ENCODE measurements at regions of chr4 and their contacts with region 1.

Region 1: DNA sequence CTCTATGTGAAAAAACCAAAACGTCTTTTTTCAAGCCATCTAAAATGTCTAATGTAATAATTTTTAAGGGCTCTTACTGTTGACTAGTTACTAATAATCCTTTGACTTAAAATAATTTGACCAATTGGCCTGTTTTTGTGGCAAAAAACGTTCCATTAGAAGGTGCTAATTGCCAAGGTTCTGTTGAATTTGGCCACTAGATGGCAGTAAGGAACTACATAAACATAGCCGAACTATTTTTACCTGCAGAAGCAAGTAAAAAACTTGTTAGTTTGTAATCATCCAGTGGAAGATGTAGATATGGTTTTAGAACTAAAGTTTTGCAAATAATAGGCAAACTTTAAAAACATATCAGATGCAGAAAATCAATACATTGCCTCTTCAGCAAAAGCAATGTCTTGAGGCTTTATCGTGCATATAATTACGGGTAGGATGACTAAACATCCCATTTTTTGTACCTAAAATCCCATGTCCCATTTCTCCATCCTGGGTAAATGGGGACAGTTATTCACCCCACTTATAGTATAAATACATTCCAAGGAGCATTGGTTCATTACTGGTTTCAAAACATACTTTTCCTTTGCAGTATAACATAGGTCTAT is 57.6 kb downstream of the PROM1 start:
- DNase-seq: peak in 1 of 2 donors; percentile 33
- ATAC-seq: peak in 3 of 8 donors; percentile 29 to 51 (median 30)
- H3K4me3 ChIP-seq: no peak overlapping the region
- H3K27ac ChIP-seq: peak overlapping the region in 1 of 10 donors; percentile 76
- H3K4me1 ChIP-seq: peaks cover 0 to 55% (median 14%) of the 10 kb centered on the region in 9 donors
- H3K27me3 ChIP-seq: no peaks in the 10 kb centered on the region
- CTCF ChIP-seq: peak; percentile 77 to 94 (median 87)

Region 2: DNA sequence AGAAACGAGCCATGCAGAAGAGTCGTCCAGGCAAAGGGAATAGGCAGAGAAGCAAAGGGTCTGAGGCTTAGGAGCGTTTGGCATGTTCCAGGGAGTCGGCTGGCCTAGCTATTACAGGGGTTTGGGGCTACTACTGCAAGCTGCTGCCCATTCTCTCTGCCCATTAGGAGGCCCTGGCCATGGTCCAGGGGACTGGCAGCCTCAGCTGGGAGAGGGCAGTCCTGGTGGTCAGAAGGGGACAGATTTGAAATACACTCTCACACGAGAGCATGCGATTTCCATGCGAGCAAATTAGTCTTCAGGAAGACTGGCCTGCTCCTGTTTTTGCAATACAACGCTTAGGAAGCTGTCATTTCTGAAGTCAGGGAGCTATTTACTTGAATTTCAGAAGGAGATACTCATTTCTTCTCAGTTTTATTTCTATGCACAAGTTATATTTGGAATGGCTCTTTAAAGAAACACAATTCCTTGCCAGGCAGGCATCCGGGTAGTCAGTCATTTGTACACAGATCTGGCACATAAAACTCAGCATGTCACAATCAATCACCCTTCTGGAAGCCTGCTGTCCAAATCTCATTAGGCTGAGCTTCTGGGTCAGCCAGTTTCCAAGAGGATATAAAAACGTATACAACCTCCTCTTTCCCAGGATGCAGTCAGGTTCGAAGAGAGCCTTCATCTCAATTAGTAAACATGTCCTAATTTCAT is 30.6 kb after region 1 on chr4:
- intact Hi-C with region 1: loop called in 1 of 10 experiments (anchors 1 kb)
- DNase-seq: no peak
- ATAC-seq: peak in 6 of 8 donors; percentile 17 to 80 (median 56)
- H3K4me3 ChIP-seq: no peak overlapping the region
- H3K27ac ChIP-seq: peak overlapping the region in 4 of 10 donors; percentile 2 to 68 (median 38)
- H3K4me1 ChIP-seq: peaks cover 2 to 30% (median 20%) of the 10 kb centered on the region in 9 donors
- H3K27me3 ChIP-seq: no peaks in the 10 kb centered on the region
- CTCF ChIP-seq: no peak

Region 3: DNA sequence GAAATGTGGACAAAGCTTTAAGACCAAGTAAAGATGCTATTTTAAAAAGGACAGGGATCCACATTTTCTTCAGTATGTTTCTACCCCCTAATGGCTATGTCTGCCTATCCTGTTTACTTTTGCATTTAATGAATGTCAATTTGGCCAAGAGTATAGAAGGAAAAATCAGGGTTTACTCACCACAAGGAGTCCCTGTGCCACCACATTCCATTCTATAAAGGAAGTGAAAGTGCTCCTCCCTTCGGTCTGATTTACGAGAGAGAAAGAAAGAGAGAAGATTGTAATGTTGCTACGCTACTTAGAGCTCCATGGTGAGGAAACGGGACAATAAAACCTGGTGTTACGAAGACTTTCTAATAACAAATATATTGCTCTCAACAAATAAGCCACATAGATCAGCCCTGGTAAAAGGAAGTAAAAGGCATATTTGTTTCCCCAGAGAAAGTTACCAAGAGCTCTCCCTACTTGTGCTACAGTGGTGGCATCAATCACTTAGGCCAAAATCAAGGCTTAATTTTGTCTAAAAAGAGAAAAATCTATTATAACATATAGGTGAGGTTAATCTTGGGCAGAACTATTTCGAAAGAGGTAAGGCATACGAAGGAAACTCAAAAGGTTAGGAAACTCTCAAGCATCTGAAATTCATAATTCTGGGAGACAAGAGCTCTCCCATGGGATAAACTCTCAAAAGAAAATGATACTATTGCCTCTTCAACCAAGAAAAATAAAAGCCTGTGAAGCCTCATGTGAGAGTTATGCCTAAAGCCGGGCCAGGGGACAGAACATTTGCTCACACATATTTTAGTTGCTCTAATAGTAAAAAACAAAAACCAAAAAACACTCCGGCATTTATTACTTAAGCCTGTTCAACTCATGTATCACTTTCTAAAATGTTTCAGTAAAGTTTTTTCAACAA is 170.5 kb after region 1 on chr4:
- intact Hi-C with region 1: loop called in 9 of 10 experiments (anchors 2 to 10 kb)
- DNase-seq: peak in 1 of 2 donors; percentile 31
- ATAC-seq: peak; percentile 73 to 93 (median 84)
- H3K4me3 ChIP-seq: peak overlapping the region in 7 of 10 donors; percentile 4 to 34 (median 26)
- H3K27ac ChIP-seq: peak overlapping the region in 9 of 10 donors; percentile 19 to 73 (median 41)
- H3K4me1 ChIP-seq: peaks cover 0 to 65% (median 55%) of the 10 kb centered on the region in 9 donors
- H3K27me3 ChIP-seq: no peaks in the 10 kb centered on the region
- CTCF ChIP-seq: peak in 7 of 9 donors; percentile 39 to 67 (median 51)

Region 4: DNA sequence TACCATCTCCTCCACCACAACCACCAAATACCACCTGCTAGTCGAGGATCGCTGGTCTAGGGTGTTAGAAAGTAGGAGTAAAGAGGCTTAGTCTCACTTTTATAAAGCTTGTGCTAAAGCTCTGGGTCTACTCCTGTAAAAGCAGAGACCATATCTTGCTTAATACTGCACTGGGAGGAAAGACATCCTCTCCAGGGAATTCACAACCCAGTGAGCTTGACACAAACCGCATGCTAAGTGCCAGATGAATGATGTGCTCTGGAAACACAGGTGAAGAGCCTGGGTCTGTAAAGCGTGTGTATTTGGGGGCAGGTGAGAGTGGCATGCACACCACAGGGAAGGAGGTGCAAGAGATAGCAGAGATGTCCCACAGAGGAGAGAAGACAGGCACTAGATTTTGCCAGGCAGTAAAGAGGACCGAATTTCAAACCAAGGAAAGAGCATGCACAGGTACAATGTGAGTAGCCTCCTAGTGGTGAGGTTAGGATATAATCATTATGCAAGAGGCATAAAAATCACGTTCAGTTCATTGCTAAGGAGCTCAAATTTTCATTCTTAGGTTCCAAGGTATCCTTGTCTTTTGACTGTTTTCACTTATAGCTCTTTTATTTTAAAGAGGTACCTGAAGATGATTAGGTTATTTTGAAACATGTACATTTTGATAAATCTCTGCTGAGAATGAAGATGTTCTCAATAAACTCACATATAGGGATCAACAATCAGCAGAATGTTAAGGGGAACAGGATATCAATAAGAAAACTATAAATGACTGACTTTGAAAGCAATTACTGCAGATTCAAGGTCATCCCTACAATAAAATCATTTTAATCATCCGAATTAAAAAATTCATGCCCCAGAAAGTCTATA is 179.3 kb after region 1 on chr4:
- intact Hi-C with region 1: loop called in 3 of 10 experiments (anchors 2 to 5 kb)
- DNase-seq: no peak
- ATAC-seq: peak in 4 of 8 donors; percentile 39 to 59 (median 48)
- H3K4me3 ChIP-seq: no peak overlapping the region
- H3K27ac ChIP-seq: no peak overlapping the region
- H3K4me1 ChIP-seq: peaks cover 0 to 60% (median 20%) of the 10 kb centered on the region in 9 donors
- H3K27me3 ChIP-seq: no peaks in the 10 kb centered on the region
- CTCF ChIP-seq: peak in 7 of 9 donors; percentile 47 to 61 (median 51)

Region 5: GRCh38 chr4:16264798-16265197 is 238.5 kb after region 1 on chr4:
- intact Hi-C with region 1: loop called (anchors 1 to 5 kb)
- DNase-seq: no peak
- ATAC-seq: peak in 7 of 8 donors; percentile 59 to 82 (median 76)
- H3K4me3 ChIP-seq: no peak overlapping the region
- H3K27ac ChIP-seq: no peak overlapping the region
- H3K4me1 ChIP-seq: peaks cover 0 to 16% (median 0%) of the 10 kb centered on the region in 9 donors
- H3K27me3 ChIP-seq: no peaks in the 10 kb centered on the region
- CTCF ChIP-seq: peak; percentile 31 to 81 (median 70)

Region 6: DNA sequence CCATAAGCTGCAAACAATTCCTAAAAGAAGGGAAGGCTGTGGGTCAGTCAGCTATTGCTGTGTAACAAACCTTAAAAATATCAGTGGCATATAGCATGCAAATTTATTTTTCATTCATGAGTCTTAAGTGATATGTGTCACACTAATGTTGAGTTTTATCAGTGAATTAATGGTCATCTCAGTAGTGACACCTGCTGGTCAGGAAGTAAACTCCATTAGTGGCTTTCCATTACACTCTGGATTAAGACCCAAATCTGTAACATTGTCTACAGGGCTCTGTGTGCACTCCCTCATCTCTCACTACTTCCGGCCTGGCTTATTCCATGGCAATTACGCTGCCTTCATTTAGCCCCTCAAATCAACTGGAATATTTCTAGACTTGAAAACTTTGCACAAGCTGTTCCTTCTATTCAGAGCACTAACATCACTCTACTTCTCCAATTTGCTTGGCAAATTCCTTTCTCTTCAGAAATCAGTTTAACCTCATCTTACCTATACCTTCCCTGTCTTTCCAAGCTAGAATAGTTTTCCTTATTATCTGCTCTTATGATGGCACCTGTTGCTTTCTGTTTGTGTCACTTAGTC is 417.3 kb after region 1 on chr4:
- intact Hi-C with region 1: loop called in 1 of 10 experiments (anchors 5 kb)
- DNase-seq: peak in 1 of 2 donors; percentile 6
- ATAC-seq: peak in 1 of 8 donors; percentile 26
- H3K4me3 ChIP-seq: no peak overlapping the region
- H3K27ac ChIP-seq: no peak overlapping the region
- H3K4me1 ChIP-seq: peaks cover 0 to 12% (median 0%) of the 10 kb centered on the region in 9 donors
- H3K27me3 ChIP-seq: no peaks in the 10 kb centered on the region
- CTCF ChIP-seq: peak; percentile 42 to 78 (median 67)

Region 7: DNA sequence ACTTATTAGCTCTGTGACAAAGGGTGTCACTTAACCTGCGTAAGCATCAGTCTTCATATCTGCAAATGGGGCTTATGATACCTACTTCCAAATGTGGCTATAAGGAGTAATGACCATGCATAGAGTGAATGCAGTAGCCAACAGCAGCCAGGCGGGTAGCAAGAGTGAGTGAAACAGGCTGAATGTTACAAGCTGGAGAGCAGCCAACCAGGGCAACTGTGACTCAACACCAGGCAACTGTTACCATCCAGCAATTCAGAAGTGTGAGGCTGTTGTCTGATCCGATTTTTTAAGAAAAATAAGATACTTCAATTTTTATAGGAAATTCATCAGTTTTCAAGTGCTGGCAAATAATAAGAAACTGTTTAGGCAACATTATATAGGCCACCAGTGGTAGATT is 470.2 kb after region 1 on chr4:
- intact Hi-C with region 1: no loop called
- DNase-seq: no peak
- ATAC-seq: no peak
- H3K4me3 ChIP-seq: no peak overlapping the region
- H3K27ac ChIP-seq: no peak overlapping the region
- H3K4me1 ChIP-seq: no peaks in the 10 kb centered on the region
- H3K27me3 ChIP-seq: no peaks in the 10 kb centered on the region
- CTCF ChIP-seq: no peak